ENCODE measurements at regions of chr11 and their contacts with region 1.

Region 1: GRCh38 chr11:14189874-14190273 is 169.1 kb downstream of the RRAS2 start:
- DNase-seq: no peak
- H3K4me3 ChIP-seq: no peak overlapping the region
- H3K27ac ChIP-seq: no peak overlapping the region
- H3K4me1 ChIP-seq: no peaks in the 10 kb centered on the region
- H3K27me3 ChIP-seq: peaks cover 4% of the 10 kb centered on the region
- CTCF ChIP-seq: no peak

Region 2: GRCh38 chr11:13376838-13377237 is 813.0 kb before region 1 on chr11:
- CTCF ChIA-PET with region 1: no interaction called
- dilution Hi-C with region 1: no loop called
- in situ Hi-C with region 1: no loop called
- intact Hi-C with region 1: no loop called
- DNase-seq: no peak
- H3K4me3 ChIP-seq: no peak overlapping the region
- H3K27ac ChIP-seq: no peak overlapping the region
- H3K4me1 ChIP-seq: no peaks in the 10 kb centered on the region
- H3K27me3 ChIP-seq: no peaks in the 10 kb centered on the region
- CTCF ChIP-seq: no peak

Region 3: DNA sequence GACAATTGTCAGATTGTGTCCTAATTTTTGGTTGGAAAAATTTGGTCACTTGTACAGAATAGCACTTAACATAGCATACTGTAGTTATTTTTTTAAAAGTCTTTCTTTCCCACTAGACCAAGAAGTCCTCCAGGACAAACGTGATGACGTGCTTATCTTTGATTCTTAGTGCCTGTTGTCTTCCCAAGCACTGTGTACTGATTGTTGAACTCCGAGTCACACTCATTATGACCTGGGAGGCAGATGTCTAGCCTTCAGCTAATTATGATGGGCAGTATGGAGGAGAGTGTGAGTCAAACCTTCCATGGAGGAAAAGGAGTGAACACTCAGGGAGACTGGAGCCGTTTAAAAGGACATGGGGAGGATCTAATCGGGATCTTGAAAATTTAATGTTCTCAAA is 107.5 kb before region 1 on chr11:
- CTCF ChIA-PET with region 1: no interaction called
- dilution Hi-C with region 1: loop called (anchors 5 kb)
- in situ Hi-C with region 1: no loop called
- intact Hi-C with region 1: no loop called
- DNase-seq: no peak
- H3K4me3 ChIP-seq: no peak overlapping the region
- H3K27ac ChIP-seq: no peak overlapping the region
- H3K4me1 ChIP-seq: no peaks in the 10 kb centered on the region
- H3K27me3 ChIP-seq: no peaks in the 10 kb centered on the region
- CTCF ChIP-seq: no peak

Measured in mammary epithelial cell (primary cell).